Activated CD4-positive, alpha-beta T cell treated with anti-CD3 and anti-CD28 coated beads, Interleukin-2, amount 10 ng/mL, durations not matched to agents 7 days and 5 days (primary cell): ENCODE measurements at regions of chr4 and their contacts with region 1.

Region 1: GRCh38 chr4:88320780-88321373 is 36.5 kb upstream of the PPM1K start:
- DNase-seq: peak; percentile 50
- H3K4me3 Mint-ChIP-seq: peak overlapping the region; percentile 72
- H3K27ac Mint-ChIP-seq: peak overlapping the region; percentile 98
- H3K4me1 Mint-ChIP-seq: peaks cover 32% of the 10 kb centered on the region
- H3K27me3 Mint-ChIP-seq: no peaks in the 10 kb centered on the region

Region 2: DNA sequence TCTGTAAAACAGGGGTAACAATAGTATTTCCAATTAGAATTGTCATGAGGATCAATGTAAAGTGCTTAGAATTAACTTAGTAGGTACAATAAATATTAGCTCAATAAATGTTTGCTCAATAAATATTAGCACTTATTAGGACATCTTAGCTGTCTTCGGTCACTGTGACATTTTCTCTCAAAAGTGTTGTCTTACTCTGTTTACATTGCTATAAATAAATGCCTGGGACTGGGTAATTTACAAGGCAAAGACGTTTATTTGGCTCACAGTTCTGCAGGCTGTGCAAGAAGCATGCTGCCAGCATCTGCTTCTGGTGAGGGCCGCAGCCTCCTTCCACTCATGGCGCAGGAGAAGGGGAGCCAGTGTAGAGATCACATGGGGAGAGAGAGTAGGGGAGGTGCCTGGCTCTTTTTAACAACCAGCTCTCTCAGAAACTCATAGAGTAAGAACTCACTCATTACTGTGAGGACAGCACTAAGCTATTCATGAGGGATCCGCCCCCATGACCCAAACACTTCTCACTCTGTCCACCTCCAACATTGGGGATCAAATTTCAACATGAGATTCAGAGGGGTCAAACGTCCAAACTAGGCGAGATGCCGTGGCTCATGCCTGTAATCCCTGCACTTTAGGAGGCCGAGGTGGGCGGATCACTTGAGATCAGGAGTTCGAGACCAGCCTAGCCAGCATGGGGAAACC is 14.2 kb after region 1 on chr4:
- CTCF ChIA-PET with region 1: interaction called, 14 read pairs
- POLR2A ChIA-PET with region 1: no interaction called
- DNase-seq: no peak
- H3K4me3 Mint-ChIP-seq: no peak overlapping the region
- H3K27ac Mint-ChIP-seq: no peak overlapping the region
- H3K4me1 Mint-ChIP-seq: peaks cover 19% of the 10 kb centered on the region
- H3K27me3 Mint-ChIP-seq: peaks cover 11% of the 10 kb centered on the region

Region 3: GRCh38 chr4:88341227-88342192 is 20.6 kb after region 1 on chr4:
- CTCF ChIA-PET with region 1: interaction called, 14 read pairs
- POLR2A ChIA-PET with region 1: interaction called, 3 read pairs
- DNase-seq: no peak
- H3K4me3 Mint-ChIP-seq: no peak overlapping the region
- H3K27ac Mint-ChIP-seq: no peak overlapping the region
- H3K4me1 Mint-ChIP-seq: no peaks in the 10 kb centered on the region
- H3K27me3 Mint-ChIP-seq: no peaks in the 10 kb centered on the region